Activated CD4-positive, alpha-beta T cell treated with anti-CD3 and anti-CD28 coated beads for 36 hours (primary cell): ENCODE measurements at regions of chr7 and their contacts with region 1.

Region 1: DNA sequence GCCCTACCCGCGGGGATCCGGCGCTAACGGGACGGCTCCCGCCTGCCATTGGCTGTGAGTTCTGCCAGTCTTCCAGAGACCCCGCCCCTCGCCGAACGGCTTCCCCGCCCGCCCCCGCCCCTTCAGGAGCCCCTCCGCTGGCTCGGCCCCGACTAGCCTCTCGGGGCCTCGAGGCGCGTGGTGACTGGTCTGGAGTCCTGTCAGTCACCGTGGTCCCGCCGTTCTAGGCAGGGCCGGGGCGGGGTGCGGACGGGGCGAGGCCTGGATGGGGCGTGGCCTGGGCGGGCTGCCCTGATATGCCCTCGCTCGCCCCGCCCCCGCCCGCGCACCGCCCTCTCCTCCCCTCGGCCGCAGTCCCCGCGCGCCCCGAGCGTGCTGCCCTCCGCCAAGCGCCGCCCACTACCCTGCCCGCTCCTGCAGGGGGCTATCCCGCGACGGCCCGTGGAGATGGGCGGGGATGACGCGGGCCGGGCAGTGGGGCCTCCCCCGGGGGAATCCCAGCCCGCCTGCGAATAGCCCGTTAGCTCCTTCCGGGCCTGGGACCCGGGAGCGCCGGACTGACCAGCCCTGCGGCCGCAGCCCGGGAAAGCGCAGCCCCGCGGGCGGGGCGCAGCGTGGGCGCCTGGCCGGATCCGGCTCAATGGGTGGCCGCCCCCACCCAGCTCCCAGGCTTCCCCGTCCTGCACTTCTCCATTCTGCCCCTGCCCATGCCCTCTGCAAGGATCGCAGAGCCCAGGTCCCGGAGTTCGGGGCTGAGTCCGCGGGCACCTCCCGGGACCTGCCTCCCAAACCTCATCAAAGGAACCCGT is 450 bp upstream of the HIP1 start:
- DNase-seq: peak; percentile 100
- ATAC-seq: peak; percentile 99
- H3K4me3 Mint-ChIP-seq: peak overlapping the region; percentile 85
- H3K27ac Mint-ChIP-seq: peak overlapping the region; percentile 91
- H3K4me1 Mint-ChIP-seq: peaks cover 19% of the 10 kb centered on the region
- H3K27me3 Mint-ChIP-seq: peaks cover 10% of the 10 kb centered on the region

Region 2: DNA sequence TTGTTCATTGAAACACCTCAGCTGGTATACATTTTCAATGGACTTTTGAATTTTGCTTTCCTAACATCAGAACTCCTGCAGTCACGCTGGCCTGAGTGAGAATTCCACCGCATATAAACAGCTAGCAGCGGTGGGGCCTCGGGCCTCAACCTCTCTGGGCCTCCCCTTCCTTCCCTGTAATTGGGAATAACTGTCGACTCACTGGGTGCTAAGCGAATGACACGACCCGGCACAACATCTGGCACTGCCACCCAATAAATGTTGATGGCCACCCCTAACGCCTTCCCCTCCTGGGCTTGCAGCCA is 666.3 kb before region 1 on chr7:
- CTCF ChIA-PET with region 1: no interaction called
- POLR2A ChIA-PET with region 1: no interaction called
- intact Hi-C with region 1: loop called in 1 of 2 experiments (anchors 5 kb)
- DNase-seq: no peak
- ATAC-seq: peak; percentile 4
- H3K4me3 Mint-ChIP-seq: peak overlapping the region; percentile 95
- H3K27ac Mint-ChIP-seq: peak overlapping the region; percentile 90
- H3K4me1 Mint-ChIP-seq: peaks cover 11% of the 10 kb centered on the region
- H3K27me3 Mint-ChIP-seq: no peaks in the 10 kb centered on the region

Region 3: GRCh38 chr7:75531359-75531821 is 207.8 kb before region 1 on chr7:
- CTCF ChIA-PET with region 1: no interaction called
- POLR2A ChIA-PET with region 1: no interaction called
- intact Hi-C with region 1: loop called (anchors 1 to 5 kb)
- DNase-seq: no peak
- ATAC-seq: no peak
- H3K4me3 Mint-ChIP-seq: no peak overlapping the region
- H3K27ac Mint-ChIP-seq: no peak overlapping the region
- H3K4me1 Mint-ChIP-seq: peaks cover 18% of the 10 kb centered on the region
- H3K27me3 Mint-ChIP-seq: no peaks in the 10 kb centered on the region

Region 4: DNA sequence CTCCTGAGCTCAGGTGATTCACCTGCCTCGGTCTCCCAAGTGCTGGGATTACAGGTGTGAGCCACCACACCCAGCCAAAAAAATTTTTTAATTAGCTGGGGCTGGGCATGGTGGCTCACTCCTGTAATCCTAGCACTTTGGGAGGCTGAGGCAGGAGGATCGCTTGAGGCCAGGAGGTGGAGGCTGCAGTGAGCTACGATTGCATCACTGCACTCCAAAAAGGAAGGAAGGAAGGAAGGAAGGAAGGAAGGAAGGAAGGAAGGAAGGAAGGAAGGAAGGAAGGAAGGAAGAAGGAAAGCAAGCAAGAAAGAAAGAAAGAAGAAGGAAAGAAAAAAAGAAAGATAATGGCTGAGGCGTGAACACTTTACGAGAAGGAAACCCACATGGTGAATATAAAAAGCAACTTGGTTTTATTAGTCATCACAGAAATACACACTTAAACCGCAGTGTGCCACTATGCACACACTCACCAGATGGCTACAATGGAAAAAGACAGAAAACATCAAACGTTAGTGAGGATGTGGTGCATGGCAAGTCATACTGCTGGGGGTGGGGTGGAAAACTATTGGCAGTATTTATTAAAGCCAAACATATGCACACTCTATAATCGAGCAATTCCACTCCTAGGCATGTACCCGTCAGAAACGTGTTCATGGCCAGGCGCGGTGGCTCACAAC is 37.2 kb after region 1 on chr7:
- CTCF ChIA-PET with region 1: no interaction called
- POLR2A ChIA-PET with region 1: interaction called, 3 read pairs
- intact Hi-C with region 1: loop called in 1 of 2 experiments (anchors 1 kb)
- DNase-seq: peak; percentile 75
- ATAC-seq: peak; percentile 96
- H3K4me3 Mint-ChIP-seq: no peak overlapping the region
- H3K27ac Mint-ChIP-seq: peak overlapping the region; percentile 77
- H3K4me1 Mint-ChIP-seq: peaks cover 44% of the 10 kb centered on the region
- H3K27me3 Mint-ChIP-seq: peaks cover 17% of the 10 kb centered on the region

Region 5: GRCh38 chr7:75842836-75843446 is 103.8 kb after region 1 on chr7:
- CTCF ChIA-PET with region 1: no interaction called
- POLR2A ChIA-PET with region 1: no interaction called
- intact Hi-C with region 1: loop called in 1 of 2 experiments (anchors 1 kb)
- DNase-seq: peak; percentile 74
- ATAC-seq: peak; percentile 95
- H3K4me3 Mint-ChIP-seq: peak overlapping the region; percentile 32
- H3K27ac Mint-ChIP-seq: peak overlapping the region; percentile 87
- H3K4me1 Mint-ChIP-seq: peaks cover 14% of the 10 kb centered on the region
- H3K27me3 Mint-ChIP-seq: no peaks in the 10 kb centered on the region

Region 6: GRCh38 chr7:75878769-75879611 is 139.8 kb after region 1 on chr7 and contains the start of gene RHBDD2:
- CTCF ChIA-PET with region 1: interaction called, 5 read pairs
- POLR2A ChIA-PET with region 1: no interaction called
- intact Hi-C with region 1: loop called in 1 of 2 experiments (anchors 1 kb)
- DNase-seq: peak; percentile 99
- ATAC-seq: peak; percentile 97
- H3K4me3 Mint-ChIP-seq: peak within 1 kb of the TSS; percentile 100
- H3K27ac Mint-ChIP-seq: peak within 1 kb of the TSS; percentile 97
- H3K4me1 Mint-ChIP-seq: peaks cover 34% of the 10 kb centered on the region
- H3K27me3 Mint-ChIP-seq: no peaks in the 10 kb centered on the region
- total RNA-seq, gene RHBDD2: 21.6 to 23.2 TPM

Region 7: GRCh38 chr7:75889826-75890225 is 150.6 kb after region 1 on chr7:
- CTCF ChIA-PET with region 1: no interaction called
- POLR2A ChIA-PET with region 1: no interaction called
- intact Hi-C with region 1: no loop called
- DNase-seq: peak; percentile 32
- ATAC-seq: peak; percentile 33
- H3K4me3 Mint-ChIP-seq: no peak overlapping the region
- H3K27ac Mint-ChIP-seq: no peak overlapping the region
- H3K4me1 Mint-ChIP-seq: peaks cover 11% of the 10 kb centered on the region
- H3K27me3 Mint-ChIP-seq: no peaks in the 10 kb centered on the region

Region 8: DNA sequence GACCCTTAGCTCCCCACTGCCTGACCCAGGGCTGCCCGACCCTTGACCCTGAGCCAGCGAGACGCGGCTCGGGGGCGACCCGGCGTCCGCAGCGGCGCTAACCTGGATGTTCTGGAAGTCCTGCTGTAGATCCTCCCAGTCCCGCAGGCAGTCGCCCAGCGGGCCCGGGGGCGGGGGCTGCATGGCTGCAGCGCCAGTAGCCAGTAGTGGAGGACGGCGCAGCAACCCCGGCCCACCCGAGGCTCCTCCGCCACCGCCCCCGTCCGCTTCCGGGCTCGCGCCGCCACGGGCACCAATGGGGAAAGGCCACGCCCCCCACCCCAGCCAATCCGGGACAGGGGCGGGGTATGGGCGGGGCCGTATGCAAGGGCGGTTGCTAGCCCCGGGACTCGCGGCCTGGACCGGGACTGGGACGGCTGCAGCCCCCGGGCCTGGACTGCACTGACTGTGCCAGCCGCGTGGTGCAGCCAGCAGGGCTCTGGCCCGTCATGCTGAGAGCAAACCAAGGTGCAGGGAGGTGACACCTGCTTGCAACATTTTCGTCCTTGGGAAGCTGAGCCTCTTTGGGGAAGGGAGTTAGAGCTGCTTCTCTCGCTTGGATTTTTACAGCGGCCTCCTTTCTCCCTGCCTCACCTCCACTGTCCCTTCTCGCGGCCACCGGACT is 255.3 kb after region 1 on chr7 and contains the start of gene TMEM120A:
- CTCF ChIA-PET with region 1: no interaction called
- POLR2A ChIA-PET with region 1: no interaction called
- intact Hi-C with region 1: loop called in 1 of 2 experiments (anchors 1 kb)
- DNase-seq: peak; percentile 97
- ATAC-seq: peak; percentile 99
- H3K4me3 Mint-ChIP-seq: peak within 1 kb of the TSS; percentile 66
- H3K27ac Mint-ChIP-seq: no peak within 1 kb of the TSS
- H3K4me1 Mint-ChIP-seq: peaks cover 29% of the 10 kb centered on the region
- H3K27me3 Mint-ChIP-seq: no peaks in the 10 kb centered on the region
- total RNA-seq, gene TMEM120A: 14.5 to 15.3 TPM